ENCODE measurements at regions of chr17 and their contacts with region 1.

Region 1: DNA sequence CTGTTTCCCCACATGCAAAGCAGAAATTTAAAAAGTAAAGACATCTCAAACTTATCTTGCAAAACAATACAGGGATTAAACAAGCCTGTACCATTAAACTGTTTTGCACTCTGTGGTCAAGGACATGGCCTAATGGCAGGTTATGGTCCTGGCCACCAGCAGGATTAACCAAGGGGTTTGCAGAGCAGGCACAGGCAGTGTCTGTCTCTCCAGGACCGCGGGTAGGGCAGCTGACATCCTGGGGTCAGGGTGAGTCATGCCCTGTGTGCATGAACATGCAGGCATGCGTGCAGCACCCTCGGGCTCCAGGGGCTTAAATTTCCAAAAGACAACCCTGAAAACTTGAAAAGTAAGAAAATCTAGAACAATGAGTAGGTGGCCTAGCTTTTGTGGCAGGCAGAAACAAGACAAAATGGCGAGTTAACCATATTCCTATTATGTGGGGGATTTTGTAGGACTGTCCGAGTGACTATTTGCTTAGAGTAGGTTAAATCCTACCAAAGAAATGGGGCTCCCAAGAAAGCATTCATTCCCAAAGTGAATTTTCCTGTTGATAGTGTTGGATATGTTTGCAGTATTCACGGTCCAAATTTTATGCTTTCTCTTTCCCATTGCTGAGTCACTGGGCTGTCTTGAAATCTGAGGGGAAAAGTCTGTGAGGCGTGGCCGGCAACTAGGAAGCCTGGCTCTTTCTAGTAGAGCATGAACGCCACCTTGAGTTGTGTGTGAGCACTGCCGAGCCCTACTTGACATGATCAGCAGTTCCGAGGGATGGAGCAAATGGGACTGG is 158.4 kb upstream of the FAM20A start:
- DNase-seq: peak; percentile 84
- ATAC-seq: peak; percentile 93
- H3K4me3 Mint-ChIP-seq: peak overlapping the region; percentile 54
- H3K27ac Mint-ChIP-seq: no peak overlapping the region
- H3K4me1 Mint-ChIP-seq: peaks cover 12% of the 10 kb centered on the region
- H3K27me3 Mint-ChIP-seq: peaks cover 1% of the 10 kb centered on the region
- CTCF ChIP-seq: peak; percentile 74

Region 2: DNA sequence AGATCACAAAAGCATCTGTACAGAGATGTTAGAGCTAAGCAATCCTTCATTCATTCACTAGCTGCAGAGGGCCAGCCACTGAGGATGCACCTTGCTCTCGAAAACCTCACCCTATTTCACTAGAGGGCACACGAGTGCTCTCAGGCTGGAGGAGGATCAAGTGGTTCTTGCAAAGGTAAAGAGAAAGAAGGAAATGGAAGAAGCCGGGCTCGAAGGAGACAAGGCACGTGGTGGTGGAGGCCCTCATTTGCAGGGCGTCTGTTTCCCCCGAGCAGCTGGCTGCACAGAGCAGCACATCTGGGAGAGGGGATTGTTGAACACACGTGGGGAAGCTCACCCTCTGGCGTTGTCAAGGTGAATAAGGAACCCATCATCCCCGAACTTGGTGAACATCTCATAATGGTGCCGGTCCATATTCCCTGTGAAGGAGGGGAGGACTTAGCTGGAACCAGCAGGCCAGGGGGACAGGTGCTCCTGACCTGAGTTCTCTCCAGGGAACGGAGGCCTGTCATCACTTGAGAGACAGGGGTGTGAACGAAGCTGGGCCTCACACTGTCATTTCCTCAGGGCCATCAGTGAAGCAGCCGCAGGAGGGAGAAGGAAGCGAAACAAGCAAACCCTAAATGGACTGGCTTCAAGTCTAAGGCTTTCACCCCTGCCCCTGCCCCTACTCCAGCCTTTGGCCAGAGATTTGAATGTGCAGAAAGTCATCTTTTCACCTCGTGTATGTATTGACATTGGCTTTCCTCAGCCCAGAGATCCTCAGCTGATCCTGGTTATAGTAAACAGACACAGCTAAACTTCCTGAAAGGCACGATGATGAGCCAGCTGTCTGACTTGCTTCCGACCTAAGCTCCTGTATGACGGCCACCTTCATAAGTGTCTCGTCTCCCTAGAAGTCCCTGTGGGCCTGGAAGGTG is 219.7 kb before region 1 on chr17:
- CTCF ChIA-PET with region 1: no interaction called
- POLR2A ChIA-PET with region 1: no interaction called
- intact Hi-C with region 1: loop called (anchors 10 kb)
- DNase-seq: no peak
- ATAC-seq: no peak
- H3K4me3 Mint-ChIP-seq: no peak overlapping the region
- H3K27ac Mint-ChIP-seq: no peak overlapping the region
- H3K4me1 Mint-ChIP-seq: no peaks in the 10 kb centered on the region
- H3K27me3 Mint-ChIP-seq: no peaks in the 10 kb centered on the region
- CTCF ChIP-seq: no peak

Region 3: GRCh38 chr17:68600067-68600930 is 159.2 kb before region 1 on chr17:
- CTCF ChIA-PET with region 1: no interaction called
- POLR2A ChIA-PET with region 1: no interaction called
- intact Hi-C with region 1: no loop called
- DNase-seq: peak; percentile 7
- ATAC-seq: peak; percentile 58
- H3K4me3 Mint-ChIP-seq: peak overlapping the region; percentile 51
- H3K27ac Mint-ChIP-seq: no peak overlapping the region
- H3K4me1 Mint-ChIP-seq: peaks cover 20% of the 10 kb centered on the region
- H3K27me3 Mint-ChIP-seq: peaks cover 53% of the 10 kb centered on the region
- CTCF ChIP-seq: no peak

Region 4: GRCh38 chr17:68800751-68801150 is 41.2 kb after region 1 on chr17:
- CTCF ChIA-PET with region 1: no interaction called
- POLR2A ChIA-PET with region 1: no interaction called
- intact Hi-C with region 1: no loop called
- DNase-seq: no peak
- ATAC-seq: no peak
- H3K4me3 Mint-ChIP-seq: no peak overlapping the region
- H3K27ac Mint-ChIP-seq: no peak overlapping the region
- H3K4me1 Mint-ChIP-seq: no peaks in the 10 kb centered on the region
- H3K27me3 Mint-ChIP-seq: peaks cover 4% of the 10 kb centered on the region
- CTCF ChIP-seq: no peak

Measured in activated CD8-positive, alpha-beta T cell treated with anti-CD3 and anti-CD28 coated beads for 36 hours (primary cell).